Body of pancreas (tissue), 4 donors: ENCODE measurements at regions of chr19 and their contacts with region 1.

Region 1: GRCh38 chr19:732148-733069 is 18.5 kb upstream of the MISP start:
- DNase-seq: no peak
- ATAC-seq: no peak
- H3K4me3 ChIP-seq: no peak overlapping the region
- H3K27ac ChIP-seq: no peak overlapping the region
- H3K4me1 ChIP-seq: no peaks in the 10 kb centered on the region
- H3K27me3 ChIP-seq: no peaks in the 10 kb centered on the region
- CTCF ChIP-seq: no peak
- POLR2A ChIP-seq: no peak

Region 2: GRCh38 chr19:664913-665443 is 67.4 kb before region 1 on chr19:
- intact Hi-C with region 1: loop called (anchors 5 kb)
- DNase-seq: peak; percentile 79 to 86 (median 82)
- ATAC-seq: peak; percentile 38
- H3K4me3 ChIP-seq: no peak overlapping the region
- H3K27ac ChIP-seq: no peak overlapping the region
- H3K4me1 ChIP-seq: peaks cover 42% of the 10 kb centered on the region
- H3K27me3 ChIP-seq: no peaks in the 10 kb centered on the region
- CTCF ChIP-seq: peak; percentile 84 to 96 (median 92)
- POLR2A ChIP-seq: no peak